ENCODE measurements at regions of chr12 and their contacts with region 1.

Region 1: DNA sequence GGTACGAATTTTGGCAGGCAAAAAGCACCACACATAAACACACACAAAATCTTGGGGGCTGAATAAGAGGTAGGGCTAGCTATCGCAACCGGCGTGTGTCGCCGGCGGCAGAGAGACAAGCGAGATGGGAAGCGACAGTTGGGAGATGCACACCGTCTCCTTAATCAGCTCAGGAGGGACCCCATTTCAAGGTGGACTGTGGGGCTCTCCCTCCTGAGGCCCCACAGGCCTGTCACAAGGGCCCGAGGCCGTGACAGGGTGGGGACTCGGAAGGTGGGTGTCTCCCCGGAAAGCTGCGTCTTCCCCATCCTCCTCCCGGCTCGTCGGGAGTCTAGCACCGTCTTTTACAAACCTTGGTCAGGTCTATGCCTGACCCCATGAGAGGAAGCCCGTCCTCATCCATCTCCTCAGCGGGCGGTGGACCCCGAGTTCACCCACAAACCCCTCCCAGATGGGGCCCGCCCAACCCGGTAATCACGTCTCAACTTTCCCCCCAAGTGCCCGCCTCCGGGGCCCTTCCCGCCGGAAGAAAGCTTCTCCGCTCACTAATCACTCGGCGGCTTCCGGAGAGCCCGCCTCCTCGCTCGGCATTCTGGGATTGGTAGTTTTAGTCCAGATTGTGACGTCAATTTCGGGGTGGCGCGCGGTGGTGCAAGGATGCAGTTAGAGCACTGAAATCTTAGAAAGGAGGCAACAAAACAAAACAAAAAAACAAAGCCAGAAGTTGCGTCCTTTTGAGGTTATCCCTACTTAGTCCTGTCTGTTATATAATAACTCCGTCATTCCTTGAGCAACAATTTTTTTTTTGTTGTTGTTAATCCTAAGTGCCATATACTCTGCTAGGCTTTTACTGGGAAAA is at the start of gene WASHC3:
- DNase-seq: peak; percentile 97
- ATAC-seq: peak; percentile 100
- total RNA-seq, gene WASHC3: 31.8 to 39.4 TPM

Region 2: GRCh38 chr12:101939856-101940265 is 121.9 kb before region 1 on chr12:
- intact Hi-C with region 1: loop called in 1 of 2 experiments (anchors 10 kb)
- DNase-seq: peak; percentile 46
- ATAC-seq: peak; percentile 51 to 62

Region 3: DNA sequence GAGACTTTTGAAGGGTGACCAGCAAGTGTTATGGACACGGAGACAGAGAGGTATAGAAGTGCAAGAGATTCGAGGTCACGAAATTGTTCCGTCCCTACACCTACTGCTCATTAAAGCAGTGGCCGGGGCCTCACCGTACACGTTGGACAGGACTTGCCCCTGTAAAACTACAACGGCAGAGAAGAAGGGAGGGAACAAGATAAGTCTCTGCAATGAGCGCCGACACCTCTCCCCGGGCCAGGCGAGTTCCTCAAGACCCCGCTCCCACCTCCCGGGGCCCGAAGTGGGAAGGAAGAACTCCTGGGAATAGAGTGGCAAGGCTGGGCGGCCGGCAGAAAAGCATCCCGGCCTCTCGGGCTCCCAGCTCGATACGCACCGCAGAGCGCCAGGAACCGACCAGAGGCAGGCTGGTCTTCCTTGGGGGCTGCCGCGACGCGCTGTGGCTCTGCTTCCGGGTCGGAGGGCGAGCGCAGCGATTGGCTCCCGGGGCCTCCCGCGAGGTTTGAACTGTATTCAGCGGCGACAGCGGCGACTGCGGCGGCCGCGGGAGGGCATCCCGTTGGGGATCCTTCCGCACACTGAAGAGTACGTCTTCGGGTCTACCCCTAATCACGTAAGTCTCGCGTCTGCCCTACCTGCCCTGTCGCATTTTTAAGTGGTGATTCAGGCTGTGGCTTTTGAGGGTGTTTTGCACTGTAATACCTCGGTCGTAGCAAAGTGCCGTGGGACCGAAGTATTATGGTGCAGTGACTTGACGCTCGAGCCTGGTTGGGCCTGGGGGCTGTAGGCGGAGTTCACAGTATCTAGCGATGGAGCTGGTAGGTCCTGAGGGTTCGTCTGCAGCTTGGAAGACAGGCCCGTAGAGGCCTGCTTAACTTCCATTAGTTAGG is 58.1 kb after region 1 on chr12 and contains the starts of genes NUP37 and PARPBP:
- intact Hi-C with region 1: loop called in 1 of 2 experiments (anchors 5 kb)
- DNase-seq: peak; percentile 91
- ATAC-seq: peak; percentile 100
- total RNA-seq, gene NUP37: 14.8 to 16.5 TPM
- total RNA-seq, gene PARPBP: 0.81 to 1.2 TPM

Region 4: DNA sequence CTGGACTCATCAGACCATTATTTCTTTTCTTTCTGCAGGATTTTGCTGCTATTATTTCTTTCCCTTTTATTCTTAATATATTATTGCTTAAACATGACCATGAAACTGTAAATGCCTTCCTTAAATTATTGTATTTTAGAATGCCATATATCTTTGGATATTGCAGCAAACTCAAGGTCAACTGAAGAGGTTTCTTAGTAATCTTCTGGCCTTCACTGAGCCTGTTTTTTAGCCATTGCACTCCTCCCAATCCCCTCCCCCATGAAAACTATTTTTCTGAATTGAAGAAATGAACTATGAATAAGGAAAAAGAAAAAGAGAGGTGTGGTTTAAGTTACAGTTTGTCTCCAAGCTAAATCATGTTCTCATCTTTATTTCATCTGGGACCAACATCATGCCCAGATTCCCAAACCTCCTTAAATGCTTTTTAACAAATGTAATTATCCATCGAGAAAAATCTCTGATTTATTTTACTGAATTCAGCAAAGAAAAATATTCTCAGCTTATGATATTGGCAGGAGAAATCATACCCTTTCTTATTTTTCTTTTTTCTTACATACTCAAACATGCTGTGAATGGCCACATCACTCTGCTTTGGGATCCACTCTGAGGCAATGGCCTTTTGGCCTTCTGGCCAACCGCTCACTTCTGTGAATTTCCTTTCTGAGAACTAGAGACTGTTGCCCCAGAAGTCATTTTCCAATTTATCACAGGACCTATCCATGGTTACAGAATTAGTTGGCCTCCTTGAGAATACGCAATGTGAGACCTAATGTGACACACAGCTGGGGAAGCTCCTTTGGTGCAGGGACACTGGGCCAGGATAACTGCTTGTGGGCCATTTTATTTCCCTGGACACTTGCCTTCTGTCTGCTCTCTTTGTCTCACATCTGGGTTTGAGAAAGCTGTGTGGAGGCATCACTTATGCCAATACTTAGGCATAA is 367.7 kb after region 1 on chr12:
- intact Hi-C with region 1: no loop called
- DNase-seq: peak; percentile 14
- ATAC-seq: peak; percentile 17 to 70